ENCODE measurements at regions of chr15 and their contacts with region 1.

Region 1: DNA sequence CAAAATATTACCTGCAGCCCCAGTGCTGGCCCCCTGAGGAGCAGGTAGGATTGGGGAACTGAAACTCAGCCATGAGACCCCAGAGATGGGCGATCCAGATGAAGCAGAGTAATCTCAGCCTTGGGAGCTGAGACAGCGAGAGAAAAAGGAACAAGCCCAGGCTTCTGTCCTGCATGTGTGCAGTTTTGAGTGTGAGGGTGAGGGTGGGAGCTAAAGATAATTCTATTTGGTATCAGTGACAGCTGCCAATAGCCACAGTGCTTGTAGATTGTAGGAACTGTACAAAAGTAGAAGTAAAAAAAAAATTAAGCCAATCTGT is 5.9 kb downstream of the ATP8B4 start:
- DNase-seq: no peak
- H3K4me3 ChIP-seq: no peak overlapping the region
- H3K27ac ChIP-seq: no peak overlapping the region
- H3K4me1 ChIP-seq: no peaks in the 10 kb centered on the region
- CTCF ChIP-seq: no peak

Region 2: GRCh38 chr15:48644827-48645557 is 1468.2 kb before region 1 on chr15:
- CTCF ChIA-PET with region 1: no interaction called
- POLR2A ChIA-PET with region 1: interaction called, 12 read pairs
- intact Hi-C with region 1: no loop called
- DNase-seq: no peak
- H3K4me3 ChIP-seq: no peak overlapping the region
- H3K27ac ChIP-seq: no peak overlapping the region
- H3K4me1 ChIP-seq: no peaks in the 10 kb centered on the region
- CTCF ChIP-seq: no peak

Region 3: DNA sequence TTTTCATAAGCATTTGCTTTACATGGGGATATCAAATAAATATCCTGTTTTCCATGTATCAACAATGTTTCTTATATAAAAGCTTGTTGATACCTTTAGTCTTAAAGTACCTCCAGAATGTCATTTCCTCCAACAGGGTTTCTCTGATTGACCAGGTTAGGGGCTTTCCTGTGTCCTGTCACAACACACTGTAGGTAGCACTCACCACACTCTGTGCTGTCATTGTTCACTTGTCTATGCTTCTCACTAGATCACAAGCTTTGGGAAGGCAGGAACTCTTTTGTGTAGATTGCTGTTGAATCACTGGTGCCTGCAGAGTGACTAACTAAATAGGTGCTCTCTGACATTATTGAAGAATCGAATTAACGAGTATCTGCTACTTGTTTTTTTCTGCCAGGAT is 383.5 kb after region 1 on chr15:
- CTCF ChIA-PET with region 1: no interaction called
- POLR2A ChIA-PET with region 1: no interaction called
- intact Hi-C with region 1: no loop called
- DNase-seq: no peak
- H3K4me3 ChIP-seq: no peak overlapping the region
- H3K27ac ChIP-seq: no peak overlapping the region
- H3K4me1 ChIP-seq: no peaks in the 10 kb centered on the region
- CTCF ChIP-seq: no peak

Measured in OCI-LY7 (cell line).